ENCODE measurements at regions of chr6 and their contacts with region 1.

Region 1: GRCh38 chr6:30212865-30213666 is at the start of gene TRIM26:
- DNase-seq: peak; percentile 83
- H3K4me3 ChIP-seq: peak within 1 kb of the TSS; percentile 79
- H3K27me3 ChIP-seq: no peaks in the 10 kb centered on the region
- CTCF ChIP-seq: no peak
- polyA plus RNA-seq, gene TRIM26: 31.8 and 41.8 TPM in 2 replicates

Region 2: GRCh38 chr6:29632789-29633533 is 580.1 kb before region 1 on chr6 and contains the start of gene GABBR1:
- CTCF ChIA-PET with region 1: no interaction called
- POLR2A ChIA-PET with region 1: interaction called, 10 read pairs
- DNase-seq: peak; percentile 53
- H3K4me3 ChIP-seq: peak within 1 kb of the TSS; percentile 80
- H3K27me3 ChIP-seq: no peaks in the 10 kb centered on the region; the same call in 1 of the 2 replicates
- CTCF ChIP-seq: no peak
- polyA plus RNA-seq, gene GABBR1: 14.5 and 16.3 TPM in 2 replicates

Region 3: GRCh38 chr6:30169658-30170614 is 43.1 kb before region 1 on chr6:
- CTCF ChIA-PET with region 1: no interaction called
- POLR2A ChIA-PET with region 1: no interaction called
- DNase-seq: no peak
- H3K4me3 ChIP-seq: no peak overlapping the region
- H3K27me3 ChIP-seq: peaks cover 30% of the 10 kb centered on the region
- CTCF ChIP-seq: peak; percentile 84

Measured in BJ (cell line).